Breast epithelium (tissue), 4 donors: ENCODE measurements at regions of chr3 and their contacts with region 1.

Region 1: DNA sequence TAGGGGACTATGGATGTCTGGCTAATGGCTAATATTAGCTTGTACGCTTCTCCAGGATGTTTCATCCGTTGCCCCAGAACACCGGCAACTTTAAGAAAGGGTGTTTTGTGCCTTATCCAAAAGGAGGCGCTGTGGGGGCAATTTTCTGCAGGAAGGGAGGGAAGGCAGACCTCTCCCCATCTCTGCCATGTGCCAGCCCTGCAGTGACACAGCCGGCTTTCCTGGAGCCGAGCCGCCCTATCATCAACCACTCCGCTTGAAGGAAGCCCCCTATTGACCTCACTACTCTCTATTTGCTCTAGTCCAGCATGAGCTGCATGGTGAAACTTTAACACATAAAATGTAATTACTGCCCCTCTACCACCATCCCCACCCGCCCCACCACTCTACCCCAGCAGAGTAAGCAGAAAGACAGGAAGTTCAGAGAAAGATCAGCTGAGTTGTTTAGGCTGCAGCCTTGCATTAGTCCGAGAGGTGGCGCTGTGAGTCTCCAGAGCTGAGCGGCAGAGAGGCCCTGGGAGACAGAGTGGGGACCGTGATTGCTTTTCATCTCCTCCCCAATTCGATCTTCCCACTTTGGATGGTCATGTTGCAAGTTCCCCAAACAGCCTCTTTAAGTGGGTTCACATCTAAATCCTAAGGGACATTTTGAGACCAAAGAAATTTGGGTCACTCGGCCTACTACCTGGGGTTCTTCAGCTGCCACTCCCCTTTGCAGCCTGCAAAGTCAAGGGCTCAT is 24.5 kb upstream of the RAD18 start:
- DNase-seq: peak in 1 of 2 donors; percentile 68
- H3K4me3 ChIP-seq: no peak overlapping the region
- H3K27ac ChIP-seq: no peak overlapping the region
- H3K4me1 ChIP-seq: no peaks in the 10 kb centered on the region
- H3K27me3 ChIP-seq: no peaks in the 10 kb centered on the region
- CTCF ChIP-seq: peak in 2 of 3 donors; percentile 58 to 66
- POLR2A ChIP-seq: no peak

Region 2: DNA sequence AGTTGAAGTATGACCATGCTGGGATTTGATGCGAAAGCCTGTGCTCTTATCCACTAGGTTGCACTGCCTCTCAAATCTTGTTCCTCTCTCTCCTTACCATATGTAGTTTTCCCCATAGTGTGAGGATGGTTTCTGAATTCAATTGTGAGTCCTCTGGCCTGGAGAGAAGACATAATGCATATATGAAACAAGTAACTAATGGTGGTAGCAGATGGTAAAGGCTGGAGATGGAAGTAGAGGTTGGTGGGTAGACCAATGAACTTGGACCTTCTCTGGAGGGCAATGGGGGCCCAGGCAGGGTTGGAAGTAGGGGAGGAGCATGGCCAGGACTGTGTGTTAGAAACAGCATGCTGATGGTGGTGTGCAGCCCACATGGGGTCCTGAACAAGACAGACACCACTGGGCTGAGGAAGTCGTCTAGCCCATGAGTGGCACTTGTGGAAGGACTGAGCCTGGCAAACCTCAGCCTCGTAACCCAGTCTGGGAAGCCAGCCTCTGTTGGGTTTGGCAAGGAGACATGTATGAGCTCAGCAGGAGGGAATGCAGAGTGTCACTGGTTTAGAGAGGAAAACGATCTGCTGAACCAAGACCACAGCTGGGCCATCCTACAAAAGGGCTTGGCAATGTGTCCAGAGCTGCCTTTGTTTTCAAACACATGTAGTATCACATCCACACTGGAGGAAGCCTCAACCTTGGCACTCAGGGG is 504.7 kb before region 1 on chr3:
- intact Hi-C with region 1: no loop called
- DNase-seq: peak; percentile 74 to 92
- H3K4me3 ChIP-seq: no peak overlapping the region
- H3K27ac ChIP-seq: peak overlapping the region; percentile 79 to 92
- H3K4me1 ChIP-seq: peaks cover 6 to 11% of the 10 kb centered on the region in 2 donors
- H3K27me3 ChIP-seq: no peaks in the 10 kb centered on the region
- CTCF ChIP-seq: no peak
- POLR2A ChIP-seq: no peak

Region 3: DNA sequence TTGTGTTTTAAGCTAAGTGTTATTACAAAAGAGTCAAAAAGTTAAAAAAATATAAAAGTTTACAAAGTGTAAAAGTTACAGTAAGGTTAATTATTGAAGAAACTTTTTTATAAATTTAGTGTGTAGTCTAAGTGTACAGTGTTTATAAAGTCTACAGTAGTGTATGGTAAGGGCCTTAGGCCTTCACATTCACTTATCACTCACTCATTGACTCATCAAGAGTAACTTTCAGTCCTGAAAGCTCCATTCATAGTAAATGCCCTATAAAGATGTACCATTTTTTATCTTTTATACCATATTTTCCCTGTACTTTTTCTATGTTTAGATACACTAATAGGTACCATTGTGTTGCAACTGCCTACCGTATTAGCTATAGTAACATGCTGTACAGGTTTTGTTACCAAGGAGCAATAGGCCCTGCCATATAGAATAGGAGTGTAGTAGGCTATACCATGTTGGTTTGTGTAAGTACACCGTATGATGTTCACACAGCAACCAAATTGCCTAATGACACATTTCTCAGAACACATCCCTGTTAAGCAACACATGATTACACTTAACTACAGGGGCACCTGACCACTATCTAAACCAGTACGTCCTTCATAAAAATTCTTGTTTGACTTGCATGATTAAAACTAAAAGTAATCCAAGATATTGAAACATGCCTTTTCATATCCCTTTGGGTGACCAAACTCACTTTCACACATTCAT is 41.8 kb before region 1 on chr3:
- intact Hi-C with region 1: no loop called
- DNase-seq: no peak
- H3K4me3 ChIP-seq: no peak overlapping the region
- H3K27ac ChIP-seq: no peak overlapping the region
- H3K4me1 ChIP-seq: no peaks in the 10 kb centered on the region
- H3K27me3 ChIP-seq: no peaks in the 10 kb centered on the region
- CTCF ChIP-seq: no peak
- POLR2A ChIP-seq: no peak

Region 4: GRCh38 chr3:9302425-9303181 is 314.8 kb after region 1 on chr3:
- intact Hi-C with region 1: loop called (anchors 10 kb)
- DNase-seq: peak; percentile 64 to 79
- H3K4me3 ChIP-seq: peak overlapping the region in 2 of 3 donors; percentile 35 to 45
- H3K27ac ChIP-seq: no peak overlapping the region
- H3K4me1 ChIP-seq: no peaks in the 10 kb centered on the region
- H3K27me3 ChIP-seq: no peaks in the 10 kb centered on the region
- CTCF ChIP-seq: peak; percentile 86 to 97 (median 97)
- POLR2A ChIP-seq: no peak